WTC11 (cell line): ENCODE measurements at regions of chr3 and their contacts with region 1.

Region 1: DNA sequence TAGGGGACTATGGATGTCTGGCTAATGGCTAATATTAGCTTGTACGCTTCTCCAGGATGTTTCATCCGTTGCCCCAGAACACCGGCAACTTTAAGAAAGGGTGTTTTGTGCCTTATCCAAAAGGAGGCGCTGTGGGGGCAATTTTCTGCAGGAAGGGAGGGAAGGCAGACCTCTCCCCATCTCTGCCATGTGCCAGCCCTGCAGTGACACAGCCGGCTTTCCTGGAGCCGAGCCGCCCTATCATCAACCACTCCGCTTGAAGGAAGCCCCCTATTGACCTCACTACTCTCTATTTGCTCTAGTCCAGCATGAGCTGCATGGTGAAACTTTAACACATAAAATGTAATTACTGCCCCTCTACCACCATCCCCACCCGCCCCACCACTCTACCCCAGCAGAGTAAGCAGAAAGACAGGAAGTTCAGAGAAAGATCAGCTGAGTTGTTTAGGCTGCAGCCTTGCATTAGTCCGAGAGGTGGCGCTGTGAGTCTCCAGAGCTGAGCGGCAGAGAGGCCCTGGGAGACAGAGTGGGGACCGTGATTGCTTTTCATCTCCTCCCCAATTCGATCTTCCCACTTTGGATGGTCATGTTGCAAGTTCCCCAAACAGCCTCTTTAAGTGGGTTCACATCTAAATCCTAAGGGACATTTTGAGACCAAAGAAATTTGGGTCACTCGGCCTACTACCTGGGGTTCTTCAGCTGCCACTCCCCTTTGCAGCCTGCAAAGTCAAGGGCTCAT is 24.5 kb upstream of the RAD18 start:
- DNase-seq: peak; percentile 85
- ATAC-seq: peak; percentile 90
- H3K4me3 Mint-ChIP-seq: peak overlapping the region; percentile 54
- H3K27ac Mint-ChIP-seq: no peak overlapping the region
- H3K4me1 Mint-ChIP-seq: peaks cover 10% of the 10 kb centered on the region
- H3K27me3 Mint-ChIP-seq: no peaks in the 10 kb centered on the region
- CTCF ChIP-seq: peak; percentile 78

Region 2: GRCh38 chr3:8702560-8702959 is 285.3 kb before region 1 on chr3:
- CTCF ChIA-PET with region 1: no interaction called
- POLR2A ChIA-PET with region 1: no interaction called
- DNase-seq: peak; percentile 70
- ATAC-seq: peak; percentile 88
- H3K4me3 Mint-ChIP-seq: no peak overlapping the region
- H3K27ac Mint-ChIP-seq: no peak overlapping the region
- H3K4me1 Mint-ChIP-seq: no peaks in the 10 kb centered on the region
- H3K27me3 Mint-ChIP-seq: peaks cover 44% of the 10 kb centered on the region
- CTCF ChIP-seq: peak; percentile 62

Region 3: DNA sequence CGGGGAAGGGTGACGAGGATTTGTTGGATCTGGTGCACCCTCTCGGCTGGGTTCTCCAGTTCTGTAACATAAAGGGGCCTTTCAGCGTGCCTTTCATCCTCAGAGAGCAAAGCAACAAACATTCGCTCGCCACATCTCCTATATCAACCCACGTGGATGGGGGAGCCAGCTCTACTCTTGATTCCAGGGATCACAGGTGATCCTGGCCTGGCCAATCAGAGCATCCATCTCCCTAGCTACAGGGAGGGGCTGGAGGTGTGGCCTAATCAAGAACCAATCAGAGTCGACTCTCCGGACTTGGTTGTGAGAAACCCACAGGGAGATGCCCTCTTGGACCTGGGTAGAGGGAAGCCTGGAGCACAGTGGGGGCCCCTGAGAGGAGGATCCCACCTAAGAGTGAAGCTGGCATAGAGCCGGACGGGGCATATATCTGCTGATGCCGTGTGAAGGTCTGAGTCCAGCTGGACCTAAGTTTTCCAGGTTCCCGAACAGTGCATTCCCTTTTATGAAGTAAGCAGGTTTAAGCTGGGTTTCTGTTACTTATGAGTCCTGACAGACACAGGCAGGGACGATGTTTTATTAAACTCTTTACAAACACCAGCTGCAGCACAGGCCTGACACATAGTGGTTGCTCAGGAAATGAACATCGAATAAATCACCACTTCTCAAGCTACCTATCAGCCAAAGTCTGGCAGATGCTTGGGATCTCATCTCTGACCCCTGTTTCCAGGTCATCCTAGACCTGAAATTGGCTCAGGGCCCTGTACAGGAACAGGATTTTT is 26.2 kb after region 1 on chr3:
- CTCF ChIA-PET with region 1: interaction called, 27 read pairs
- POLR2A ChIA-PET with region 1: no interaction called
- DNase-seq: no peak
- ATAC-seq: peak; percentile 47; the same call in 1 of the 2 replicates
- H3K4me3 Mint-ChIP-seq: no peak overlapping the region
- H3K27ac Mint-ChIP-seq: no peak overlapping the region
- H3K4me1 Mint-ChIP-seq: no peaks in the 10 kb centered on the region
- H3K27me3 Mint-ChIP-seq: no peaks in the 10 kb centered on the region
- CTCF ChIP-seq: no peak

Region 4: GRCh38 chr3:9041626-9042025 is 53.8 kb after region 1 on chr3:
- CTCF ChIA-PET with region 1: interaction called, 18 read pairs
- POLR2A ChIA-PET with region 1: no interaction called
- DNase-seq: no peak
- ATAC-seq: no peak
- H3K4me3 Mint-ChIP-seq: no peak overlapping the region
- H3K27ac Mint-ChIP-seq: no peak overlapping the region
- H3K4me1 Mint-ChIP-seq: no peaks in the 10 kb centered on the region
- H3K27me3 Mint-ChIP-seq: no peaks in the 10 kb centered on the region
- CTCF ChIP-seq: no peak

Region 5: GRCh38 chr3:9067352-9067975 is 79.7 kb after region 1 on chr3:
- CTCF ChIA-PET with region 1: interaction called, 37 read pairs
- POLR2A ChIA-PET with region 1: no interaction called
- DNase-seq: peak; percentile 66
- ATAC-seq: peak; percentile 94
- H3K4me3 Mint-ChIP-seq: no peak overlapping the region
- H3K27ac Mint-ChIP-seq: no peak overlapping the region
- H3K4me1 Mint-ChIP-seq: no peaks in the 10 kb centered on the region
- H3K27me3 Mint-ChIP-seq: no peaks in the 10 kb centered on the region; the same call in 1 of the 2 replicates
- CTCF ChIP-seq: peak; percentile 72

Region 6: GRCh38 chr3:9102240-9102981 is 114.6 kb after region 1 on chr3:
- CTCF ChIA-PET with region 1: interaction called, 21 read pairs
- POLR2A ChIA-PET with region 1: no interaction called
- DNase-seq: peak; percentile 80
- ATAC-seq: peak; percentile 86
- H3K4me3 Mint-ChIP-seq: no peak overlapping the region; the same call in 1 of the 2 replicates
- H3K27ac Mint-ChIP-seq: peak overlapping the region; percentile 91
- H3K4me1 Mint-ChIP-seq: peaks cover 53% of the 10 kb centered on the region
- H3K27me3 Mint-ChIP-seq: no peaks in the 10 kb centered on the region; the same call in 1 of the 2 replicates
- CTCF ChIP-seq: no peak

Region 7: DNA sequence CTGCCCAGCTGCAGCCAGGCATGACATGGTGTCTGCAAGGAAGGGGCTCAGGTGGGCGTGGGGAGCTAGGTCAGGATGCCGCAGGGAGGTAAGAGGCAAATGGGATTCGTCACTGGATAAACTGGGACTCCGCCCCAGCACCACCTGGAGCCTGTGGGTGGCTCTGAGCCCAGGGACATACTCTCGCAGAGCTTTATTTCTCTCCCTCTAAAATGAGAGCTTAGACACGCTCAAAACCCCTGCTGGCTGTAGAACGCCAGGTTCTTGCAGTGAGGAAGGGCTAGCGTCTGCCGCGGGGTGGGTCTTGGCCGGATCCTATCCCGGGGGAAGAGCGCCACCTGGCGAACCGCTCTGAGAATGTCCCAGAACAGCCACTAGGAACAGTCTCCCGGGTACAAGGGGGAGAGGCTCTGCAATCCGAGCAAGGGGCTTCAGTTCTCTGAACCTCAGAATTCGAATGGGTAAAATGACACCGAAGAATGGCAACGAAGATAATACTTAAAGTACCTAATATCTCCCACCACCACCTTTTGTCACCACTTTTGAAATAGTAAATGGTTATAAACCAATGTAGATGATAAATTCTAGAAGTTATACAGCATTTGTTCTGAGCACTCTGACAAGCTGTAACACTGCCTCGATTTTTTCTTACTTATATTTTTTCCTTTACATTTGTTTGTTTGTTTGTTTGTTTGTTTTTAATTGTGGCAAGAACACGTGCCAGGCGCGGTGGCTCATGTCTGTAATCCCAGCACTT is 314.8 kb after region 1 on chr3:
- CTCF ChIA-PET with region 1: interaction called, 115 read pairs
- POLR2A ChIA-PET with region 1: interaction called, 3 read pairs
- DNase-seq: peak; percentile 89
- ATAC-seq: peak; percentile 91
- H3K4me3 Mint-ChIP-seq: peak overlapping the region; percentile 70
- H3K27ac Mint-ChIP-seq: no peak overlapping the region
- H3K4me1 Mint-ChIP-seq: peaks cover 14% of the 10 kb centered on the region
- H3K27me3 Mint-ChIP-seq: peaks cover 14% of the 10 kb centered on the region
- CTCF ChIP-seq: peak; percentile 85